ENCODE measurements at regions of chr3 and their contacts with region 1.

Region 1: GRCh38 chr3:64939747-64940450 is 252.1 kb upstream of the ADAMTS9 start:
- DNase-seq: no peak
- ATAC-seq: no peak
- H3K4me3 ChIP-seq: no peak overlapping the region
- H3K27ac ChIP-seq: peak overlapping the region in 1 of 4 donors; percentile 26
- H3K4me1 ChIP-seq: peaks cover 17 to 28% of the 10 kb centered on the region in 2 donors
- H3K27me3 ChIP-seq: no peaks in the 10 kb centered on the region
- CTCF ChIP-seq: no peak
- POLR2A ChIP-seq: no peak

Region 2: DNA sequence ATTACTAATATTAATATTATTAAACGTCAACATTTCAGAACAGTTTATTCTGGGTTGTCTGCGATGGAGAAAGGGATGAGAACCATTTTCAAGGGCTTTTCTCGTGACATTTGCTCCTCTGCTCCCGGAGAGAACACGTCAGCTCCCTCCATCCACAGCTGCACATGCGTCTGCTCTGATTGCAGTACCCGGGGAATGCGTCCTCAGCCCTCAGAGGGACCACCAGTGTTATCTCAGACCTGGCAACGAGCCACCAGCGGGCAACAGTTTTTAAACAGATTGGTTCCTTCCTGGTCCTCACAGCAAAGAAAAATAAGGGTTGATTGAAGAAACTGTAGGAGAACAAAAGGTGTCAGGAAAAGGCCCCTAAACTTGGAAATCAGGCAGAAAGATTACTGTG is 49.9 kb before region 1 on chr3:
- in situ Hi-C with region 1: no loop called
- intact Hi-C with region 1: loop called (anchors 5 kb)
- DNase-seq: peak; percentile 19 to 24
- ATAC-seq: peak in 1 of 2 donors; percentile 50
- H3K4me3 ChIP-seq: no peak overlapping the region
- H3K27ac ChIP-seq: peak overlapping the region in 3 of 4 donors; percentile 32 to 62 (median 59)
- H3K4me1 ChIP-seq: peaks cover 6 to 17% of the 10 kb centered on the region in 2 donors
- H3K27me3 ChIP-seq: no peaks in the 10 kb centered on the region
- CTCF ChIP-seq: no peak
- POLR2A ChIP-seq: no peak

Measured in gastrocnemius medialis (tissue), 4 donors.